Naive thymus-derived CD8-positive, alpha-beta T cell (primary cell): ENCODE measurements at regions of chr17 and their contacts with region 1.

Region 1: GRCh38 chr17:39822051-39822451 is 42.1 kb downstream of the IKZF3 start:
- DNase-seq: no peak
- ATAC-seq: no peak
- H3K4me3 Mint-ChIP-seq: peak overlapping the region in 1 of 10 donors; percentile 15
- H3K27ac Mint-ChIP-seq: peak overlapping the region; percentile 88 to 97 (median 94)
- H3K4me1 Mint-ChIP-seq: peaks cover 21 to 57% (median 56%) of the 10 kb centered on the region in 4 donors
- H3K27me3 Mint-ChIP-seq: no peaks in the 10 kb centered on the region

Region 2: DNA sequence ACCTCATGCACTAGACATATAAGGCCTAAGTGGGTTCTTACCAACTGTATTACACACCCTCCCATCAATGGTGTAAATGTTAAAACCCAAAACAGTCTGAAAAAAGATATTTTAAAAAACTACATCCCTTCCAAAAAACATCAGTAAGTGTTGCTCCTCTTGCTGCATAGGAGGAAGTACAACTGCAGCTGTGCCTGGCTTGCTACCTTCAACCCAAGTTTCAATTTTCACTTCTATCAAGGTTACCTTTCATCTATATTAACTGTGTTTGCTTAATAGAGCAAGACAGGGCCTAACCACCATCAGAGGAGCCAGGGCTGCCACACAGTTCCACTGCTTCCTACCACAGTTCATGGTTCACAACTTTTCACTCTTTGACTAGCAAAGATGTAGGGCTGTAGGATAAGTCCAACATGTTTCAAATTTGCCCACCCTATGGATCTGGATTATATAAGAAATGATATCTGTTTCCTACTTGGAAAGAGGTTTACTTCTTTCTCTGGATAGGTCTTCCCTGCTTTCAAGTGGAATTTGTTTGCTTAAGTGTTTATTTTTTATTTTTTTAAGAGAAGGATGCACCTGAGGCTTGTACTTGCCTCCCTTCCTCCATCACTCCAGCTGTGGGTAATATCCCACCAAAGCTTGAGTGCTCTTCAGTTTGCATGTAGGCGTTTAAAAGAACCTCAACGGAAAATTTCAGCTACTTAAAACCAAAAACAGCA is 27.6 kb before region 1 on chr17:
- POLR2A ChIA-PET with region 1: interaction called, 10 read pairs
- DNase-seq: peak in 4 of 10 donors; percentile 32 to 53 (median 42)
- ATAC-seq: peak; percentile 69 to 79
- H3K4me3 Mint-ChIP-seq: peak overlapping the region; percentile 60 to 86 (median 74)
- H3K27ac Mint-ChIP-seq: peak overlapping the region; percentile 84 to 98 (median 94)
- H3K4me1 Mint-ChIP-seq: peaks cover 46 to 87% (median 81%) of the 10 kb centered on the region in 4 donors
- H3K27me3 Mint-ChIP-seq: no peaks in the 10 kb centered on the region

Region 3: DNA sequence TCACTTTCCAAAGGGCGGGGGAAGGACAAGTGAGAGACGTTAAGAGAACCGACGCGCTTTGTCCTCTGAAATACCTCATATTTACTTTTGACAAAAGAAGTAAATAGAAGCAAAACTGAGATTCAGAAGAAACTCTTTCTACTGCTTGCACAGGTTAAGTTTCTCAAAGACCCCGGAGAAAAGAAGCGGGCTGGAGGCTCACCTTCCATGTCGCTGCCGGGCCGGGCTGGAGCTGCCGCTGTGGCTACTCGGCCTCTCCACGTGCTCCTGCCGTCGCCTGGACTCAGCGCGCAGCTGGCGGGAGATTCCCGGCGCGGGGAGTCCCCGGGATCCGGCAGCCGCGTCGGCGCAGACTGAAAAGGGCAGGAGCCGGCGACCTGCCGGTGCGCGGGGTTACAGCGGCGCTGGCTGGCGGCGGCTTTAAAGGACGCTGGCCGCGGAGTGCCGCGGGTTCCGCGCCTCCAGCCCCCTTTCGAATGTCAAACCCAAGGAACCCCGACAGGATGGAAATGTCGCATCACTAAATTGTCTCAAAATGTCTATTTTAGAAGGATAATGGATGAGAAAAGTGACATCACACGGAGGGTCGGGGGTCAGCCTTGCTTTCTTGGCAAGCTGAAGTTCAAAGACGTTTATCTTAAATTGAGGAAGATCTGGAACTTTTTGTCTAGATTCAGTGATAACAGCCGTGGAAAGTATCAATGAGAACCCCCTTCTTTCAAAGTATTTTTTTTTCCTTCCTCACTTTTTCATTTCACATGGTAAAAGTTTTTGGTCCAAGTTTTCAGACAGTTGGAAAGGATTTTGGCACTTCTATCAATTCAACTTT is 42.1 kb after region 1 on chr17 and contains the start of gene IKZF3:
- POLR2A ChIA-PET with region 1: interaction called, 13 read pairs
- DNase-seq: peak; percentile 71 to 87 (median 80)
- ATAC-seq: peak; percentile 75 to 85
- H3K4me3 Mint-ChIP-seq: peak within 1 kb of the TSS; percentile 92 to 99 (median 96)
- H3K27ac Mint-ChIP-seq: peak within 1 kb of the TSS; percentile 96 to 98 (median 98)
- H3K4me1 Mint-ChIP-seq: peaks cover 26 to 74% (median 64%) of the 10 kb centered on the region in 4 donors
- H3K27me3 Mint-ChIP-seq: no peaks in the 10 kb centered on the region
- polyA plus RNA-seq, gene IKZF3: 18.8 to 59.2 (median 21.5) TPM